Right ventricle myocardium inferior (tissue), 1 donor: ENCODE measurements at regions of chr5 and their contacts with region 1.

Region 1: GRCh38 chr5:64147849-64148441 is 17.7 kb upstream of the RNF180 start:
- DNase-seq: peak; percentile 79
- ATAC-seq: peak; percentile 71

Region 2: DNA sequence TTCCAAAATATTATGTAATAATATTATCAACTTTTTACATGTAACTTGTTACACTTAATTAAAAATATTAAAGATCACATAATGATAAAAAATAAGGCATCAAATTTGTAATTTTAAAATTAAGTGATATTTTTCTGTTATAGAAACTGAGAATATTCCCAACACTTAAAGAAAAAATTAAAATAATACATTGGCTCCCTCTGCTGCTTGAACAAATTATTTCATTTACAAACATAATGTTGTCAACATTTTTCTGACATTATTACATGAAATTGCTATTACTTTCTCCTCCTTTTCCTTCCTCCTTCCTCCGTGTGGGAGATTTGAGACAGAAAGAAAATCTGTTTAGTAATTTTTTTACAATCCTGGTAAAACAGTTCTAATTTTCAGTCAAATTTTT is 60.0 kb after region 1 on chr5:
- intact Hi-C with region 1: loop called (anchors 2 kb)
- DNase-seq: no peak
- ATAC-seq: no peak

Region 3: GRCh38 chr5:64612344-64612961 is 464.5 kb after region 1 on chr5:
- intact Hi-C with region 1: loop called (anchors 1 kb)
- DNase-seq: no peak
- ATAC-seq: peak; percentile 60

Region 4: DNA sequence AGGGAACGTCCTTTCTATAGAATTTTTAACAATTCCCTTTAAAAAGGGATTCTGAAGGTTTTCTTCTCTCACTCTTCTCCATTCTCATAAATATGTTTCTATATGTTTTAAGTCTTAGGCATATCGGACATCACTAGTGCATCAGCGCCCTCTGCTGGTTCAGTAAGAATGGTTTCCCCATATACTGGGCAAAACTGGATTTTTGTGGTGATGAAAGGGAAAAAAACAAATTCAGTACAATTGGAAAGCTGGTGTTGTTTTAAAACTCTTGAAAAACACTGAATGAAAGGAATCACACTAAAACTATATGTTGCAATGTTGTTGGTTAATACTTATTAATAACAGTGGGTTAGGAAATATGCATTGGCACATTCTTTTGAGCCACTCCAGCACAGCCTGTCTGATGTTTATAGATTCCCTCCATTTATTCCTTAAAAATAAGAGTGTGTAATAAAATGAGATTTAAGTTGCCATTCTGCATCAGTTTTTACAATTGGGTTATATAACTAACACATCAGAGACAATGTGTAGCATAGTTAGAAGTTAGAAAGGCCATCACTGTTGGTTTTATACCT is 636.6 kb after region 1 on chr5:
- intact Hi-C with region 1: loop called (anchors 10 kb)
- DNase-seq: peak; percentile 53
- ATAC-seq: no peak